OCI-LY7 (cell line): ENCODE measurements at regions of chr11 and their contacts with region 1.

Region 1: GRCh38 chr11:35165423-35166368 is 26.7 kb downstream of the CD44 start:
- DNase-seq: peak; percentile 82
- H3K4me3 ChIP-seq: peak overlapping the region; percentile 53
- H3K27ac ChIP-seq: peak overlapping the region; percentile 39
- H3K4me1 ChIP-seq: peaks cover 43% of the 10 kb centered on the region
- CTCF ChIP-seq: no peak

Region 2: DNA sequence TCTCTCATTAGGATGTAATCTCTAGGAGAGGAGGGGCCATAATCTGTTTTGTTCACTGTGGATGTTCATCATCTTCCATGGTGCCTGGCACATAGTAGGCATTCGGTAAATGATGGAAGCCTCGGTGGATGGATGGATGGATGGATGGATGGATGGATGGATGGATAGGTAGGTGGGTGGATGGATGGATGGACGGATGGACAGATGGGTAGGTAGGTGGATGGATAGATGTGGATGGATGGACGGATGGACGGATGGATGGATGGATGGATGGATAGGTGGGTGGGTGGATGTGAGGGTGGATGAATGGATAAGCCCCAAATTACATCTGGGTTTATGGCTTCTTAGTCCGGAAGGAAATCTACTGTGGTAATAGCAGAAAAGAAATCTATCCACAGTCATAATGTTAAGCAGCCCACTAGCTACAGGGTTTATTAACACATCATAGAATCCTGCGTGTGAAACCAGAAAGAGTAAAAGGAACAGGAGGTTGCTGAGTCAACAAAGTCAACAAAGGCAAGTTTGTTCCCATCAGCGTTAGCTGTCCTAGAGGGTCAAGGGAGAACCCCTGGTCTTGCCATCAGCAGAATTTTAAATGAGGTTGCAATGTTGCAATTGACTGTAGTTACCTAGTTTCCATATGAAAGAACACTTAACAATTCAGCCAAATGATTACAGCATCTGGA is 1547.9 kb before region 1 on chr11:
- CTCF ChIA-PET with region 1: no interaction called
- POLR2A ChIA-PET with region 1: no interaction called
- intact Hi-C with region 1: no loop called
- DNase-seq: no peak
- H3K4me3 ChIP-seq: no peak overlapping the region
- H3K27ac ChIP-seq: no peak overlapping the region
- H3K4me1 ChIP-seq: peaks cover 9% of the 10 kb centered on the region
- CTCF ChIP-seq: no peak

Region 3: DNA sequence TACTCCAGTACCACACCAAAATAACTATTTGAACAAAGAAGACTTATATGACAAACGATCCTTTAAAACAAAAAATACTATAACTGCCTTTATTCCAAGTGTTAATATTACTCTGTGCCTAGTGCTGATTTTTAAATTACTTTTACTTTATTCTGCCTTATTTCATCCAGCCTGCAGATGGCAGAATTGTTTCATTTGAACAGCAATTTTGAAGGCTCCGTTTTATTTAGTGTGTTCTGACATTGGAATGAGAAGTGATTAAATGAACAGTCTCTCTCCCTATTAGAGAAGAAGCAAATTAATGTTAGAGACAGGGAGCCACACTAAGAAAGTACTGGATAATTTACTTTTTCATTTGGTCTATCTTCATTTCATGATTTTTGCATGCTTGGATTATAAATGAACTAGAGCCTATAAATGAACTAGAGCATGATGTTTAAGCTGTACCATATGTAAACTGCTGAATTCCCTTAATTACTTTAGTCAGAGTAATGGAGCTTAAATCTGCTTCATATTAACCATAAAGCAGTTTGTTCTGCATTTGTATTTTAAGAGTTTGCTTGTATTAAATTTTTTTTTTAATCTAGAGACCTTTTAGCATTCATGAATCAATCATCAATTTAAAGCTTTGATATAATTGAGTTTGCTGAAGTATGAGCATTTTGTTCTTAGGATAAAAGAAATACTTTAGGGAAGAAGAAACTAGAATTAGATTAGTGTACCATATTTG is 239.4 kb before region 1 on chr11:
- CTCF ChIA-PET with region 1: no interaction called
- POLR2A ChIA-PET with region 1: interaction called, 3 read pairs
- intact Hi-C with region 1: loop called (anchors 5 kb)
- DNase-seq: peak; percentile 58
- H3K4me3 ChIP-seq: no peak overlapping the region
- H3K27ac ChIP-seq: no peak overlapping the region
- H3K4me1 ChIP-seq: no peaks in the 10 kb centered on the region
- CTCF ChIP-seq: peak; percentile 97

Region 4: GRCh38 chr11:35077709-35078469 is 87.8 kb before region 1 on chr11:
- CTCF ChIA-PET with region 1: no interaction called
- POLR2A ChIA-PET with region 1: interaction called, 4 read pairs
- intact Hi-C with region 1: loop called (anchors 5 kb)
- DNase-seq: peak; percentile 85
- H3K4me3 ChIP-seq: peak overlapping the region; percentile 35
- H3K27ac ChIP-seq: peak overlapping the region; percentile 89
- H3K4me1 ChIP-seq: peaks cover 50% of the 10 kb centered on the region
- CTCF ChIP-seq: no peak

Region 5: DNA sequence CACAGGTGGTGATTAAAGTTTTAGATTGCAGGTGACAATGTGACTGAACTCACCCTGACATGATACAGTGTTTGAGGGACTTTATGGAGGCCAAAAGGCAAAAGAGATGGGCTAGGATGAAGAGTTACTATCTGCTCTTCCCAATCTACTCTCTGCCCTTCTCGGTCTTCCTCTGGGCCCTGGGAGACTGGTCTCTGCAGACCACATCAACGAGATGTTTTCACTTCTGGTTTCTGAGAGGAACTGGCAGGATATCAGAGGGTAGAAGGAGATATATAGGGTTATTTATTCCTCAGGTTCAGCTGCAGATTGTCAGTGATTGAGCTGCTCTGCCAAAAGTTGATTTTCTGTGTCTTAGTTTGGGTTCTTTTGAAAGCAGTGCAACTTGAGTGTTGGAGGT is 59.1 kb before region 1 on chr11:
- CTCF ChIA-PET with region 1: no interaction called
- POLR2A ChIA-PET with region 1: interaction called, 3 read pairs
- intact Hi-C with region 1: loop called (anchors 1 kb)
- DNase-seq: peak; percentile 84
- H3K4me3 ChIP-seq: peak overlapping the region; percentile 35
- H3K27ac ChIP-seq: peak overlapping the region; percentile 84
- H3K4me1 ChIP-seq: peaks cover 55% of the 10 kb centered on the region
- CTCF ChIP-seq: no peak

Region 6: DNA sequence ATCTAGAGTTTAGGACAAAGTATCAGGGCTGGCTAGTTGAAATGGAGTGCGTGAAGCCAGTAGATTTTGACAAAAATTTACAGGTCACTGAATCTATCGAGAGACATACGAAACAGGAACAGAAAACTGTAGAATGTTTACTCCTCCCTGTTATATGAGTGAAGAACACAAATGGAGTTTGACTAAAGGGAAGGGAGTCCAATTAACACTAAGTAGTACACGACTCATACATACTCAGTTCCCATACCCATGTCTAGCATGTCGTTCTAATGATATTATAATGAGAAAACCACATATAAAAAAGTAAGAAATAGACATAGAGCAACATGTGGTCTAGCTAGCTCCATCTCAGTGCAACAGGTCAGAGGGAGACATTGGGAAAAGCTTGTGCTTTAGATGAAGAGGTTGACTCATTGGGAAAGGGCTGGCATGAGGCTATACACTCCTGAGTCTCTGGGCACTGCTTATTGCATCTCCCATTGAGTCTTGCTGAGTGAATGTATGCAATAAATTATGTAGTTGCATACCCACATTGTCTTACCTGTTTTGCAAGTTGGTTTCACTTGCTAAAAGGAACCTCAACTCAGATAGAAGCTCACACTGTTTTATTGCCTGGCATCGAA is 16.7 kb after region 1 on chr11:
- CTCF ChIA-PET with region 1: interaction called, 7 read pairs
- POLR2A ChIA-PET with region 1: interaction called, 13 read pairs
- intact Hi-C with region 1: no loop called
- DNase-seq: peak; percentile 38
- H3K4me3 ChIP-seq: no peak overlapping the region
- H3K27ac ChIP-seq: no peak overlapping the region
- H3K4me1 ChIP-seq: peaks cover 15% of the 10 kb centered on the region
- CTCF ChIP-seq: no peak

Region 7: DNA sequence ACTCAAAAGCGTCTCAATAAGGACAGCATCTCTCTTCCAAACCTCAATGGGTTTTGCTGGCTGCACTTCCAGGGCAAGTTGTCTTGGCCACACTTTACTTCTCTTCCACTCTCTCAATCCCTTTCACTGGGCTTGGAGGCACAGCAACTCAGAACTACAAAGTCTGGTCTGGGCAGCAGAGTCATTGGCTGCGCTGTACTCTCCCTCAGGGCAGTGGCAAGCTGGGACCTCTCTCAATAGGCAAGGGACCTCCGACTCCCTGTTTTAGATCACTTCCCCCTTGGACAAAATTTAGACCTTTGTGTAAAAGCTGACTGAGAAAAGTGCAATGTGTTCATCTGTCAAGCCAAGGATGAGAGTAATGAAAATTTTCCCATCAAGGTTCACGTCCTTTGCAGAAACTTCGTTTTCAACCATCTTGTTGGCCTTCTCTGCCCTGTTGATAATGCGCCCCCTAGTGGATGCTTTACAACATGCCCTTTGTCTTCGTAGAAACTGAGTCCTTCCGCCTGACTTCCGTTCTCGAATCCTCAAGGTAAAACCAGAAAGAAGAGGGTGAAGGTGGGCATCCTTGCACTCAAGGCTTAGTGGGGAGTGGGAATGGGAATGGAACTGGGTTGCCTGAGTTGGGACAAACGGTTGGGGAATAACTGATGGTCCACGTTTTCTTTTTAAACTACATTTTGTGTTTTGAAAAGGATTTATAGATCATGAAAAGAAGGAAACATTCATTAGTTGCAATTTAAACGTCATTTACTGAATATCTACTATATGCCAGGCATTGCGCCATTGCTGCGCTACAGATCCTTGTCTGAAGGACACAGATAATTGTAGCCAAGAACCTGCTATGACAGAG is 72.4 kb after region 1 on chr11:
- CTCF ChIA-PET with region 1: no interaction called
- POLR2A ChIA-PET with region 1: interaction called, 4 read pairs
- intact Hi-C with region 1: loop called (anchors 5 kb)
- DNase-seq: peak; percentile 83
- H3K4me3 ChIP-seq: no peak overlapping the region
- H3K27ac ChIP-seq: no peak overlapping the region
- H3K4me1 ChIP-seq: peaks cover 12% of the 10 kb centered on the region
- CTCF ChIP-seq: peak; percentile 99